ENCODE measurements at regions of chr6 and their contacts with region 1.

Region 1: DNA sequence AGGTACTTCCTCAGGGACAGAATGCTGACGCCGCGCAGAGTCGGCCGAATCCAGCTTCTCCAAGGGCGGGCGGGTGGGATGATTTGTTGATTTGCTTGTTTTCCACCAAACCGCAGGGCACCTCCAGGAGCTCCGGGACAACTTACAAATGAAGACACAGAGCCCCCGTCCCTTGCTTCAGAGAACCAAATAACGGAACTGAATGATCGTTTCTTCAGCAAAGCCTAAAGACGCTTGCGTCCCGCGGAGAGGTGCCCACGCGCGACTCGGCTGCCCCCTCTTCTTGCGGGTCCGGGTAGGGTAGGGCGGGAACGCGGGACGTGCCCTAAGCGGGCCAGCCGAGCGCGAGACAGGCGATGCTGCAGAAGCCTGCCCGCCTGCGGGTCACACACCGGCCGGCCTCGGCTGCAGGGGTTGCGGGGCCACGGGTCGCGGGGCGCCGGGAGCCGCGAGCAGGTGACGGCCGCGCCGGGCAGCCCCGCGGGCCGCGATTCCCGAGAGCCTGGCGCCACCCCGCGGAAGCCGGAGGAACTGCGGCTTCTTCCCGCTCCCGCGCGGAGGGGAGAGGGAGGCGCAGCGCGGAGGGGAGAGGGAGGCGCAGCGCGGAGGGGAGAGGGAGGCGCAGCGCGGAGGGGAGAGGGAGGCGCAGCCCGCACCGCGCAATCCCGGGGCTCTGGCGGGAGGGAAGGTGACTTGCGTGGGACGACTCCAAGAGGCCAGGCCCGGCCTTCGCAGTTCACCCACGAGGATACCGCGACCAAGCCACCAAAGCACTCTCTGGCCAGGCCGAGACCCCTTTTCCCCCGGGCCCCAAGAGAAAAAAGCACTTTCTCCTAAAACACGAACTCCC is 7.7 kb upstream of the FOXF2 start:
- DNase-seq: peak; percentile 49 to 54
- H3K4me3 ChIP-seq: peak overlapping the region in 1 of 3 donors; percentile 11
- H3K27ac ChIP-seq: no peak overlapping the region
- H3K4me1 ChIP-seq: peaks cover 15 to 46% of the 10 kb centered on the region in 2 donors
- H3K27me3 ChIP-seq: peaks cover 76% of the 10 kb centered on the region
- CTCF ChIP-seq: peak; percentile 41 to 96 (median 88)
- POLR2A ChIP-seq: no peak

Region 2: GRCh38 chr6:722077-722524 is 659.6 kb before region 1 on chr6:
- intact Hi-C with region 1: loop called (anchors 10 kb)
- DNase-seq: peak; percentile 64 to 75
- H3K4me3 ChIP-seq: no peak overlapping the region
- H3K27ac ChIP-seq: no peak overlapping the region
- H3K4me1 ChIP-seq: peaks cover 0 to 4% of the 10 kb centered on the region in 2 donors
- H3K27me3 ChIP-seq: no peaks in the 10 kb centered on the region
- CTCF ChIP-seq: peak; percentile 61 to 86 (median 66)
- POLR2A ChIP-seq: no peak

Region 3: DNA sequence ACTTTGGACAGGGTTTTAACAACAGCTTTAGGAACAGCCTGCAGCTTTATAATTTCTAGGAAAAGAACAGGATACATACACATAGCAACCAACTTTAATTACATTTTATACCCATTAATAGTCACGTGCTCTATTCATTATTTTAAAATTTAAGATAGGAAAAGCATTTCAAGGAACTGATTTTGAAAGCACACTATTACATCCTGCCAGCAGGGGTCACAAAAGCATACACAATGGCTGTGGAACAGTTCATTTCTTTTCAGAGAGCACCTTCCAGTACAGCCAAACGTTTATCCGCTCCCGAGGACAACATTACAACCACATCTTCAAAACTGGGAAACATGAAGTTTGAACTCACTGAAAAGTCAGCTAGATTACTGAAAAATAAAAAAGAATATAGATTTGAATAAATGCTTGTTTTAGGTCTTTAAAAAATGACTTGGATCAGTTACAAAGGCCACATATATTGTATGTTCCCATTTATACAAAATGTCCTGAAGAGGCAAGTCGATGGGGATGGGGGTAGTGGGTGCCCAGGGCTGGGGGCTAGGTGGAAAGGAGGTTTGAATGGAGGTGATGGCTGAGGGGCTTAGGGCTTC is 584.1 kb before region 1 on chr6:
- intact Hi-C with region 1: loop called (anchors 5 kb)
- DNase-seq: peak; percentile 54 to 56
- H3K4me3 ChIP-seq: no peak overlapping the region
- H3K27ac ChIP-seq: no peak overlapping the region
- H3K4me1 ChIP-seq: no peaks in the 10 kb centered on the region
- H3K27me3 ChIP-seq: peaks cover under 1% of the 10 kb centered on the region
- CTCF ChIP-seq: peak; percentile 49 to 92 (median 74)
- POLR2A ChIP-seq: no peak

Region 4: DNA sequence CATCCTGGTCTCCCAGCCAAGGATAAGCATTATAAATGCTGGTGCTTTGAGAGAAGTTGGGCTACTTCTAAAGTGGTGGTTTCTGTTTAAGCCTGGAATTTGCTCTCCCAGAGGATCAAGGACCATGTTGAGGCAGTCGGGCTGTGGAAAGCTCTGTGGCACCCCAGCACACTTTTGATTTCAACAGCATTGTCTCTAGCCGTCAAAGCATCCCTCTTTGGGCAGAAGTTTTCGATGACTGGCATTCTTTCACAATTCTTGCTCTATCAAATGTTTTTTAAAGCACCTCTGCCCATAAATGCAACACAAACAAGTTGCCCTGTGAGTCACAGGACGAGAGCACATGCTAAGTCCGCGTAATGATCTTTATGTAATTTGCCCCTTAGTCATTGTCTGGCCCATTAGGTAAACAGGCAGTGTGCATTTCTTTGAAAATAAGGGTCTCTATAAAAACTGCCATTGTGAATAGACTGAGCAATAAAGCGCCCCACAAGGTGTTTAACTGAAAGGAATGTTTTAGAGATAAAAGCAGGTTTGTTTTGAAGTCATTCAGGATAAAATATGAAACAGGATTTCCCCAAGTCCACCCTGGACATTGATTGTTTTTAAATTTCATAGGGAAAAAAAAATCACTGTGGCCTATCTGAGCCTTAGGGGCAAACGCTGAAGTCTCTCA is 114.5 kb before region 1 on chr6:
- intact Hi-C with region 1: no loop called
- DNase-seq: no peak
- H3K4me3 ChIP-seq: no peak overlapping the region
- H3K27ac ChIP-seq: no peak overlapping the region
- H3K4me1 ChIP-seq: peaks cover 0 to 5% of the 10 kb centered on the region in 2 donors
- H3K27me3 ChIP-seq: no peaks in the 10 kb centered on the region
- CTCF ChIP-seq: no peak
- POLR2A ChIP-seq: no peak

Measured in thyroid gland (tissue), 4 donors.